ENCODE measurements at regions of chr3 and their contacts with region 1.

Region 1: GRCh38 chr3:42061713-42062408 is 29.3 kb upstream of the TRAK1 start:
- DNase-seq: peak; percentile 90
- H3K4me3 Mint-ChIP-seq: peak overlapping the region; percentile 58
- H3K27ac Mint-ChIP-seq: peak overlapping the region; percentile 97
- H3K4me1 Mint-ChIP-seq: peaks cover 34% of the 10 kb centered on the region
- H3K27me3 Mint-ChIP-seq: no peaks in the 10 kb centered on the region
- CTCF ChIP-seq: no peak

Region 2: GRCh38 chr3:41808152-41808551 is 253.7 kb before region 1 on chr3:
- CTCF ChIA-PET with region 1: no interaction called
- POLR2A ChIA-PET with region 1: no interaction called
- intact Hi-C with region 1: no loop called
- DNase-seq: peak; percentile 48
- H3K4me3 Mint-ChIP-seq: no peak overlapping the region
- H3K27ac Mint-ChIP-seq: no peak overlapping the region
- H3K4me1 Mint-ChIP-seq: peaks cover 6% of the 10 kb centered on the region
- H3K27me3 Mint-ChIP-seq: no peaks in the 10 kb centered on the region
- CTCF ChIP-seq: no peak

Region 3: DNA sequence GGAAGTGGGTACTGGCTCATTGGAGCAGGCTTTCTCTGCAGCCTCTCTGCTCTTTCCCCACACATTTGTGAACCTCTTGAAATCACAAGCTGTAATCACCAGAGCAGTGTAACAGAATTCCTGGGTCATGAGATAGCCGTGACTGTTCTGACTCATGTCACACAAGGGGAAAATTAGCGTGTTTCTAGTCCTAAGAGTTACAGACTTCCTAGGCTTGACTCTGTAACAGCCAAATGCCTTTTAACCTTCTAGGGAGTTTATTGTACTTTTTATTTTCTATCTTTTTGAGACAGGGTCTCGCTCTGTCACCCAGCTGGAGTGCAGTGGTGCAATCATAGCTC is 25.4 kb before region 1 on chr3:
- CTCF ChIA-PET with region 1: interaction called, 5 read pairs
- POLR2A ChIA-PET with region 1: interaction called, 35 read pairs
- intact Hi-C with region 1: no loop called
- DNase-seq: peak; percentile 70
- H3K4me3 Mint-ChIP-seq: no peak overlapping the region
- H3K27ac Mint-ChIP-seq: peak overlapping the region; percentile 70
- H3K4me1 Mint-ChIP-seq: peaks cover 63% of the 10 kb centered on the region
- H3K27me3 Mint-ChIP-seq: no peaks in the 10 kb centered on the region
- CTCF ChIP-seq: no peak

Region 4: GRCh38 chr3:42071904-42072592 is 10.2 kb after region 1 on chr3:
- CTCF ChIA-PET with region 1: interaction called, 5 read pairs
- POLR2A ChIA-PET with region 1: interaction called, 27 read pairs
- intact Hi-C with region 1: no loop called
- DNase-seq: peak; percentile 94
- H3K4me3 Mint-ChIP-seq: peak overlapping the region; percentile 50
- H3K27ac Mint-ChIP-seq: peak overlapping the region; percentile 43
- H3K4me1 Mint-ChIP-seq: peaks cover 34% of the 10 kb centered on the region
- H3K27me3 Mint-ChIP-seq: no peaks in the 10 kb centered on the region
- CTCF ChIP-seq: no peak

Region 5: DNA sequence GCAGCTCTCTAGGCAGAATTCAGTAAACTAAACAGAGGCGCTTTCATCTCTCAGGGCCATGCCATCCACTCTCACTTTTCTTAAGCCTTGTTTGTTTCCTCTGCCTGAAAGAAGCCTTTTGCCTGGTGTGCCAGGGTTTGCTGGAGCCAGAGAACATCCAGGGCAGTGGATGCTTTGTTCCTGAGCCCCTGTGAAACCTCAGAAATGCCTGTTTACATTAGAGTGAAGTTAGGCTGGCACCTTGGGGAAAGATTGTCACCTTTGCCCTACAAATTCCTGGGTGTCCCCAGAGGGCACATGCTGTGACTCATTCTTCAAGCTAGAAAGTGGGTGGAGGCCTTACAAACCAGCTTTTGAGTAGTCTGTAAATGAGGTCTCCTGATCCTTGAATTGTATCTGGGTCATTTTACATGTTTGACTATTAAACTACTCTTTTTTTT is 18.6 kb after region 1 on chr3:
- CTCF ChIA-PET with region 1: interaction called, 5 read pairs
- POLR2A ChIA-PET with region 1: interaction called, 56 read pairs
- intact Hi-C with region 1: no loop called
- DNase-seq: peak; percentile 84
- H3K4me3 Mint-ChIP-seq: peak overlapping the region; percentile 37
- H3K27ac Mint-ChIP-seq: peak overlapping the region; percentile 97
- H3K4me1 Mint-ChIP-seq: peaks cover 28% of the 10 kb centered on the region
- H3K27me3 Mint-ChIP-seq: no peaks in the 10 kb centered on the region
- CTCF ChIP-seq: no peak

Region 6: DNA sequence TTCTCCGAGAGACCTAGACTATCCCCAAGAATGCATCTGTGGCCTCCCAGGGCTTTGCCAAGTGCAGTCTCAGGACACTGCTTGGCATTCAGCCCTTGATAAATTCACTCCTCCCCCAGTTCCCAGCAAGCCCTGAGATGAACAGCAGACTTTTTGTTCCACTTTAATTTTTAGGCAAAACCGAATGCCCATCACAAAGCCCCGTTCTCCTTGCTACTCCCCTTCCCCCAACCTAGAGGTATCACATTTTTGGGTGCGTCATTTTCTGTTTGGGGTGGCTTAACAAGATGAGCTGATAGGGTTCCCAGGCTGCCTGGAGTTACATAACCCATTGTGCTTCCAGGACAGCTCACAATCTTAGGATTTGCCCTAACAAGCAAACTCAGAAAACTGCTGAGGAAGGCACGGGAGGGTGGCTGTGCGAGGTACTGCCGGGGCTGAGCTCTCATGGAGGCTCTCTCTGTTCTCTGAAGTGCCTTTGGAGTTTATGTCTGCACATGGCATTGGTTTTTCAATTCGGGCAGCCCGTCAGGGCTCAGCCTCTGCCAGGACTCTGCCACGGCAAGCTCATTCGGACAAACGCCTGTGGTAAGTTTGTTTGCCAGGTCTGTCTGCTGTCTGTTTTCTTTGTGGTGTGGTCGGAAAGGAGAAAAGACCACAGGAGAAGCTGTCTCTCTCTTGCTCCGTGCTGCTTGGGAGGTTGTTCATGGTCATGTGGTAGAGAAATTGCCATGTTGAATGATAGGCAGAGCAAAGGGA is 29.3 kb after region 1 on chr3 and contains the start of gene TRAK1:
- CTCF ChIA-PET with region 1: interaction called, 3 read pairs
- POLR2A ChIA-PET with region 1: interaction called, 34 read pairs
- intact Hi-C with region 1: no loop called
- DNase-seq: peak; percentile 91
- H3K4me3 Mint-ChIP-seq: peak within 1 kb of the TSS; percentile 70
- H3K27ac Mint-ChIP-seq: peak within 1 kb of the TSS; percentile 72
- H3K4me1 Mint-ChIP-seq: peaks cover 20% of the 10 kb centered on the region
- H3K27me3 Mint-ChIP-seq: no peaks in the 10 kb centered on the region
- CTCF ChIP-seq: no peak
- total RNA-seq, gene TRAK1: 32.8 and 33.2 TPM in 2 replicates